ENCODE measurements at regions of chr19 and their contacts with region 1.

Region 1: DNA sequence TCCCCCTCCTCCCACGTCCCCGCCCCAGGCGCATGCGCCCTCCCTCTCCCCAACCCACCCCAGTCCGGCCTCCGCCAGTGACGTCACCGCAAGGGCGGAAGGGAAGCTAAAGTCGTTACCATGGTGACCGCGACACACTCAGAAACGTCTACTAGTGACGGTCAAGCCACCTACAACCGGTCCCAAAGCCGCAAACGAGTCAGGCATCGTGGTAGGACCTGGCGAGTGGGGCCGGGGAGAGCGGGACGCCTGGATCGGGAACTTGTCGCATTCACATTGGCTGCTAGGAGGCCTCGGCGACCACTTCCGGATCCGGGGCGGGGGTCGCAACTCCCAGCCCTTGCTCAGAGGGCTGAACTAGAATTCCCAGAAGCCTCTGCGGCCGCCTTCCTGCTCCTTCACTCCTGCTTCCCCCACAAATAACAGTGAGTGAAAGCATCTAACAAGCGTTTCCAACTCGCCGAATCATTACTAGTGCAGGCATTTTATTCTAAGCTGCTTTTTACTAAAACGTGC is at the start of gene ZSCAN5A:
- DNase-seq: peak; percentile 93 to 99 (median 98)
- ATAC-seq: peak; percentile 73
- H3K4me3 ChIP-seq: peak within 1 kb of the TSS; percentile 87 to 88
- H3K4me3 Mint-ChIP-seq: peak within 1 kb of the TSS; percentile 95
- H3K27ac ChIP-seq: peak within 1 kb of the TSS; percentile 96 to 100
- H3K27ac Mint-ChIP-seq: peak within 1 kb of the TSS; percentile 99
- H3K4me1 ChIP-seq: peaks cover 21% of the 10 kb centered on the region
- H3K4me1 Mint-ChIP-seq: peaks cover 26% of the 10 kb centered on the region
- H3K27me3 ChIP-seq: no peaks in the 10 kb centered on the region
- H3K27me3 Mint-ChIP-seq: no peaks in the 10 kb centered on the region
- CTCF ChIP-seq: no peak
- total RNA-seq, gene ZSCAN5A: 4.6 to 7.0 TPM

Region 2: GRCh38 chr19:55005684-55006488 is 1308.7 kb before region 1 on chr19:
- CTCF ChIA-PET with region 1: no interaction called
- POLR2A ChIA-PET with region 1: no interaction called
- intact Hi-C with region 1: loop called in 1 of 2 experiments (anchors 5 kb)
- DNase-seq: peak; percentile 4 to 95 (median 54)
- ATAC-seq: peak; percentile 90
- H3K4me3 ChIP-seq: peak overlapping the region; percentile 52 to 53
- H3K4me3 Mint-ChIP-seq: peak overlapping the region; percentile 71
- H3K27ac ChIP-seq: peak overlapping the region; percentile 66 to 90
- H3K27ac Mint-ChIP-seq: peak overlapping the region; percentile 87
- H3K4me1 ChIP-seq: peaks cover 17% of the 10 kb centered on the region
- H3K4me1 Mint-ChIP-seq: peaks cover 24% of the 10 kb centered on the region
- H3K27me3 ChIP-seq: peaks cover 0 to 2% of the 10 kb centered on the region in 2 experiments
- H3K27me3 Mint-ChIP-seq: peaks cover 25% of the 10 kb centered on the region
- CTCF ChIP-seq: no peak

Region 3: GRCh38 chr19:56140583-56141416 is 173.8 kb before region 1 on chr19 and contains the start of gene ZNF444:
- CTCF ChIA-PET with region 1: interaction called, 3 read pairs
- POLR2A ChIA-PET with region 1: no interaction called
- intact Hi-C with region 1: loop called in 1 of 2 experiments (anchors 1 kb)
- DNase-seq: peak; percentile 98 to 100 (median 99)
- ATAC-seq: peak; percentile 84
- H3K4me3 ChIP-seq: peak within 1 kb of the TSS; percentile 69 to 74
- H3K4me3 Mint-ChIP-seq: peak within 1 kb of the TSS; percentile 92
- H3K27ac ChIP-seq: peak within 1 kb of the TSS; percentile 66 to 86
- H3K27ac Mint-ChIP-seq: peak within 1 kb of the TSS; percentile 93
- H3K4me1 ChIP-seq: peaks cover 20% of the 10 kb centered on the region
- H3K4me1 Mint-ChIP-seq: peaks cover 38% of the 10 kb centered on the region
- H3K27me3 ChIP-seq: no peaks in the 10 kb centered on the region
- H3K27me3 Mint-ChIP-seq: no peaks in the 10 kb centered on the region
- CTCF ChIP-seq: no peak
- total RNA-seq, gene ZNF444: 17.2 to 18.6 TPM

Region 4: DNA sequence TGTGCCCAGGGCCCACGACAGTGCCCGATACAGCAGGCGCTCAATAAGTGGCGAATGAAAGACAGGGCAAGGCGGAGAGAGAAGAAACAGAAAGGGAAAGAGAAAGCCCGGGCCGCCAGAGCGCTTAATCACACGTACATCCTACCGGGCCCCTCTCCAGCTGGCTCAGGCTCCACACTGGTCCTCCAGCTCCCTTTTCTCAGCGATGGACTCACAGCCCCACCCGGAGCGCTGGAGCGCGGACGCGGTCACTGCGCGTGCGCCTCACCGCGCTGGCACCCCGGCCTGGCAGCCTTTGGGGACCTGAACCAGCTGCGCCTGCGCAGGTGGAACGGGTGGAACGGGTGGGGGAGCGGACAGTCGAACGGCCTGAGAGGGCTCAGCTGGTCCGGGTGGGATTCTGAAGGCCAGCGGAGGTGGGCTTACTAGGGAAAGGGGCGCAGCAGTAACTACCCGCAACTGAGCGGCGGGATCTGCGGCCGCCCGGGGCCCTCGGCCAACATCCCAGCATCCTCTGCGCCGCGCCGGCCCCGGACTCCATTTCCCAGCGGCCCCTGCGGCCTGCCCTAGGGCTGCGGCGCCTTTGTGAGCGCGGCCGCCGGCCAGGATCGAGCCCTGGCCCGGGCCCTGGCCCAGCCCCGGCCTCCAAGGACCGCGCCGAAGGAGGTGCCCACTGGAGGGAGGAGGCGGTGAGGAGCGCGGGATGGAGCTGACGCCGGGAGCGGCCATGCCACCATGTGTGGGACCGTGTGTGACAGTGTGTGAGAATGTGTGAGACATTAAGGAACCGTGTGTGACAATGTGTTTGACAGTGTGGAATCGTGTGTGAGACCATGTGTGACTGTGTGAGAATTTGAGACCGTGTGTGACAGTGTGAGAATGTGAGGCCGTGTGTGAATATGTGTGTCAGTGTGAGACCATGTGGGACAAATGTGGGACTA is 89.4 kb after region 1 on chr19 and contains the start of gene ZNF583:
- CTCF ChIA-PET with region 1: no interaction called
- POLR2A ChIA-PET with region 1: no interaction called
- intact Hi-C with region 1: loop called (anchors 1 kb)
- DNase-seq: peak; percentile 83 to 95 (median 91)
- ATAC-seq: peak; percentile 82
- H3K4me3 ChIP-seq: peak within 1 kb of the TSS; percentile 80 to 93
- H3K4me3 Mint-ChIP-seq: peak within 1 kb of the TSS; percentile 85
- H3K27ac ChIP-seq: peak within 1 kb of the TSS; percentile 83 to 99
- H3K27ac Mint-ChIP-seq: peak within 1 kb of the TSS; percentile 88
- H3K4me1 ChIP-seq: peaks cover 18% of the 10 kb centered on the region
- H3K4me1 Mint-ChIP-seq: peaks cover 32% of the 10 kb centered on the region
- H3K27me3 ChIP-seq: no peaks in the 10 kb centered on the region
- H3K27me3 Mint-ChIP-seq: no peaks in the 10 kb centered on the region
- CTCF ChIP-seq: no peak
- total RNA-seq, gene ZNF583: 1.3 to 2.4 TPM

Region 5: GRCh38 chr19:56491399-56491798 is 176.8 kb after region 1 on chr19:
- CTCF ChIA-PET with region 1: no interaction called
- POLR2A ChIA-PET with region 1: no interaction called
- intact Hi-C with region 1: no loop called
- DNase-seq: no peak
- ATAC-seq: no peak
- H3K4me3 ChIP-seq: no peak overlapping the region
- H3K4me3 Mint-ChIP-seq: no peak overlapping the region
- H3K27ac ChIP-seq: no peak overlapping the region
- H3K27ac Mint-ChIP-seq: no peak overlapping the region
- H3K4me1 ChIP-seq: no peaks in the 10 kb centered on the region
- H3K4me1 Mint-ChIP-seq: no peaks in the 10 kb centered on the region
- H3K27me3 ChIP-seq: no peaks in the 10 kb centered on the region
- H3K27me3 Mint-ChIP-seq: no peaks in the 10 kb centered on the region
- CTCF ChIP-seq: no peak

Region 6: DNA sequence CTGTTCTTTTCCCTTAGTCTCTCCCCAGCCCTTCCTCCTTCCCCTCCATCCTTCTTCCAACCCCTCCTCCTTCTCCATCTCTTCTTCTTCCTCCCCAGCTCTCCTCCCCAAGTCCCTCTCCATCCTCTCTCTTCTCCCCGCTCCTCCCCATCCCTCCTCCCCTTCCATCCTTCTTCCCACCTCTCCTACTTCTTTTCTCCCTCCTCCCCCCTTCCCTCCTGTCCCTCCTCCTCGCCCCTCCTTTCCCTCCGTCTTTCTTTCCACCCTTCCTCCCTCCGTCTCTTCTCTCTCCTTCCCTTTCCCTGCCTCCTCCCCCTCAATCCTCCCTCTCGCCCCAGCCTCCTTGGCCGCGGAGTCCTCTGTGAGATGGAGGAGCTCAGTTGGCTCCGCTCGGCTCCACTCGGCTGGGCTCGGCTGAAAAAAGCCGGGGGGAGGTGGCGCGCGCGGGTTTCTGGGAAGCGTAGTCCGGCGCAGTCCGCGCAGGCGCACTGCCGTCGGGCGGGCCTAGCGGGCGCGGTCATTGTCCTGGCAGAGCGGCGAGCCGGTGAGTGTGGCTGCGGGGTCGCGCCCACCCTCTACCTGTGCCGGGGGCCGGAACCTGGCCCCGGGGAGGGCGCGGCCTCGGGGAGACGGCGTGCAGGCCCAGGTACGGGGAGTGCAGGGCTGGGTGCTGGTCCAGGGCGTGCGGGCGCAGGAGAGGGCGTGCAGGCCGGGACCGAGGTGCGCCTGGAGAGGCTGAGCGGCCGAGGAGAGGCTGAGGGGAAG is 280.3 kb after region 1 on chr19 and contains the start of gene ZNF71:
- CTCF ChIA-PET with region 1: no interaction called
- POLR2A ChIA-PET with region 1: no interaction called
- intact Hi-C with region 1: loop called in 1 of 2 experiments (anchors 1 kb)
- DNase-seq: peak; percentile 72 to 91 (median 87)
- ATAC-seq: peak; percentile 96
- H3K4me3 ChIP-seq: peak within 1 kb of the TSS; percentile 45 to 72
- H3K4me3 Mint-ChIP-seq: peak within 1 kb of the TSS; percentile 91
- H3K27ac ChIP-seq: peak within 1 kb of the TSS; percentile 58 to 65
- H3K27ac Mint-ChIP-seq: peak within 1 kb of the TSS; percentile 91
- H3K4me1 ChIP-seq: peaks cover 18% of the 10 kb centered on the region
- H3K4me1 Mint-ChIP-seq: peaks cover 19% of the 10 kb centered on the region
- H3K27me3 ChIP-seq: no peaks in the 10 kb centered on the region
- H3K27me3 Mint-ChIP-seq: no peaks in the 10 kb centered on the region
- CTCF ChIP-seq: no peak
- total RNA-seq, gene ZNF71: 2.4 to 2.8 TPM

Measured in CD8-positive, alpha-beta T cell (primary cell).